ENCODE measurements at regions of chr10 and their contacts with region 1.

Region 1: GRCh38 chr10:86376852-86377796 is 10.5 kb upstream of the GRID1 start:
- DNase-seq: peak; percentile 75 to 89 (median 88)
- ATAC-seq: peak; percentile 82 to 93
- H3K4me3 ChIP-seq: no peak overlapping the region
- H3K27ac ChIP-seq: no peak overlapping the region
- H3K4me1 ChIP-seq: no peaks in the 10 kb centered on the region
- H3K27me3 ChIP-seq: peaks cover 3% of the 10 kb centered on the region

Region 2: GRCh38 chr10:84537447-84537931 is 1839.6 kb before region 1 on chr10:
- intact Hi-C with region 1: loop called in 1 of 4 experiments (anchors 10 kb)
- DNase-seq: peak; percentile 49 to 82 (median 64)
- ATAC-seq: peak; percentile 88
- H3K4me3 ChIP-seq: no peak overlapping the region
- H3K27ac ChIP-seq: no peak overlapping the region
- H3K4me1 ChIP-seq: no peaks in the 10 kb centered on the region
- H3K27me3 ChIP-seq: no peaks in the 10 kb centered on the region

Region 3: DNA sequence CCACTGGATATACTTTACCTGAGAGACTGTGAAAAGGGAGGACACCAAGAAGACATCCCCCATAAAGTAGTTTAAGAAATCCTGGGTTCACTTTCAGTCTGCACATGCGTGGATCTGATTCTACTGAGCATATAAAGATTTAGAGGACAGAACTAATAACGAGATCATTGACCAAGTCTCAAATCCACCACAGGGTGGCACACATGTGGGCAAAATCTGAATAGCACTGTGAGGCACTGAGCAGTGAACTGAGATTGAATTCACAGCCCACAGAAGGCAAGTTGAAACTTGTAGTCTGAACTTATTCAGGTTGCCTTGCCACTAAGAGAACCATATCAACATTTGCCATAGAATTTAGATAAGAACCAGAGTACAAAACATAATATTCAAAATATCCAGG is 829.1 kb before region 1 on chr10:
- intact Hi-C with region 1: loop called in 3 of 4 experiments (anchors 5 to 10 kb)
- DNase-seq: no peak
- ATAC-seq: peak in 1 of 2 donors; percentile 57
- H3K4me3 ChIP-seq: no peak overlapping the region
- H3K27ac ChIP-seq: no peak overlapping the region
- H3K4me1 ChIP-seq: no peaks in the 10 kb centered on the region
- H3K27me3 ChIP-seq: no peaks in the 10 kb centered on the region

Region 4: GRCh38 chr10:85557077-85557476 is 820.0 kb before region 1 on chr10:
- intact Hi-C with region 1: loop called in 2 of 4 experiments (anchors 10 kb)
- DNase-seq: no peak
- ATAC-seq: peak in 1 of 2 donors; percentile 31
- H3K4me3 ChIP-seq: no peak overlapping the region
- H3K27ac ChIP-seq: no peak overlapping the region
- H3K4me1 ChIP-seq: no peaks in the 10 kb centered on the region
- H3K27me3 ChIP-seq: no peaks in the 10 kb centered on the region

Region 5: GRCh38 chr10:85786401-85786899 is 590.7 kb before region 1 on chr10:
- intact Hi-C with region 1: loop called in 1 of 4 experiments (anchors 10 kb)
- DNase-seq: peak in 1 of 3 donors; percentile 53
- ATAC-seq: peak; percentile 41 to 49
- H3K4me3 ChIP-seq: no peak overlapping the region
- H3K27ac ChIP-seq: no peak overlapping the region
- H3K4me1 ChIP-seq: no peaks in the 10 kb centered on the region
- H3K27me3 ChIP-seq: no peaks in the 10 kb centered on the region

Region 6: DNA sequence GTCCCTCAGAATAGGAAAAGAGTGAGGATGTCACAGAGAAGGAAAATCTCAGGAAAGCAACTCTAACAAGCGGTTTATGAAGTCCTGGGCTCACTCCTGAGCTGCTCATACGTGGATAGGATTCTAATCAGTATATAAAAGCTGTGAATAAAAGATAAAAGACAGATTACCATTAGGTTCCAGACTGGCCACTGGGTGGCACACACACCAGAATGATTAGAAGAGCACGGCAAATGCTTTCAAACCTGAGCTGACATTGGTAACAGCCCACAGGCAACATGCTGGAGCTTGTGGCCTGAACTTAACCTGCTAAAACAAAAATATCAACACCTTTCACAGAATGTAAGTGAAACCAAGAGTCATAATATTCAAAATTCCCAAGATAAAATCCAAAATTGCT is 381.3 kb before region 1 on chr10:
- intact Hi-C with region 1: loop called in 1 of 4 experiments (anchors 10 kb)
- DNase-seq: no peak
- ATAC-seq: no peak
- H3K4me3 ChIP-seq: no peak overlapping the region
- H3K27ac ChIP-seq: no peak overlapping the region
- H3K4me1 ChIP-seq: no peaks in the 10 kb centered on the region
- H3K27me3 ChIP-seq: no peaks in the 10 kb centered on the region

Measured in right cardiac atrium (tissue), 5 donors.